ENCODE measurements at regions of chrX and their contacts with region 1.

Region 1: GRCh38 chrX:101078716-101079598 is at the start of gene TMEM35A:
- DNase-seq: peak; percentile 19
- ATAC-seq: peak; percentile 84
- H3K4me3 Mint-ChIP-seq: peak within 1 kb of the TSS; percentile 86
- H3K27ac Mint-ChIP-seq: peak within 1 kb of the TSS; percentile 41; the same call in 1 of the 2 replicates
- H3K4me1 Mint-ChIP-seq: peaks cover 22% of the 10 kb centered on the region
- H3K27me3 Mint-ChIP-seq: peaks cover 11% of the 10 kb centered on the region
- CTCF ChIP-seq: no peak
- total RNA-seq, gene TMEM35A: 3.9 to 4.2 TPM (median 3.9 TPM) in 3 replicates

Region 2: GRCh38 chrX:100649550-100650356 is 429.2 kb before region 1 on chrX:
- CTCF ChIA-PET with region 1: no interaction called
- POLR2A ChIA-PET with region 1: no interaction called
- DNase-seq: peak; percentile 11
- ATAC-seq: peak; percentile 82
- H3K4me3 Mint-ChIP-seq: no peak overlapping the region
- H3K27ac Mint-ChIP-seq: no peak overlapping the region
- H3K4me1 Mint-ChIP-seq: peaks cover 43% of the 10 kb centered on the region
- H3K27me3 Mint-ChIP-seq: no peaks in the 10 kb centered on the region; the same call in 1 of the 2 replicates
- CTCF ChIP-seq: no peak

Region 3: GRCh38 chrX:100939333-100939732 is 139.6 kb before region 1 on chrX:
- CTCF ChIA-PET with region 1: no interaction called
- POLR2A ChIA-PET with region 1: no interaction called
- DNase-seq: no peak
- ATAC-seq: no peak; the same call in 1 of the 2 replicates
- H3K4me3 Mint-ChIP-seq: no peak overlapping the region
- H3K27ac Mint-ChIP-seq: no peak overlapping the region
- H3K4me1 Mint-ChIP-seq: peaks cover 2% of the 10 kb centered on the region; the same call in 1 of the 2 replicates
- H3K27me3 Mint-ChIP-seq: no peaks in the 10 kb centered on the region
- CTCF ChIP-seq: no peak

Region 4: GRCh38 chrX:101097546-101098453 is 18.8 kb after region 1 on chrX and contains the start of gene CENPI:
- CTCF ChIA-PET with region 1: no interaction called
- POLR2A ChIA-PET with region 1: interaction called, 11 read pairs
- DNase-seq: peak; percentile 93
- ATAC-seq: peak; percentile 100
- H3K4me3 Mint-ChIP-seq: peak within 1 kb of the TSS; percentile 94
- H3K27ac Mint-ChIP-seq: peak within 1 kb of the TSS; percentile 90
- H3K4me1 Mint-ChIP-seq: peaks cover 9% of the 10 kb centered on the region
- H3K27me3 Mint-ChIP-seq: peaks cover 3% of the 10 kb centered on the region; the same call in 1 of the 2 replicates
- CTCF ChIP-seq: no peak
- total RNA-seq, gene CENPI: 18.1 to 20.1 TPM (median 19.5 TPM) in 3 replicates

Measured in WTC11 (cell line).